ENCODE measurements at regions of chrX and their contacts with region 1.

Region 1: GRCh38 chrX:48521353-48522243 is at the start of gene EBP:
- DNase-seq: peak; percentile 83
- ATAC-seq: peak; percentile 96
- H3K4me3 ChIP-seq: peak within 1 kb of the TSS; percentile 68
- H3K27ac ChIP-seq: peak within 1 kb of the TSS; percentile 62
- H3K4me1 ChIP-seq: peaks cover 7% of the 10 kb centered on the region; the same call in 1 of the 2 replicates
- H3K27me3 ChIP-seq: no peaks in the 10 kb centered on the region
- CTCF ChIP-seq: no peak
- EP300 ChIP-seq: no peak
- POLR2A ChIP-seq: peak; percentile 94
- RAD21 ChIP-seq: no peak
- polyA plus RNA-seq, gene EBP: 364 to 628 TPM

Region 2: GRCh38 chrX:48508400-48509244 is 13.0 kb before region 1 on chrX and contains the start of gene PORCN:
- CTCF ChIA-PET with region 1: no interaction called
- POLR2A ChIA-PET with region 1: interaction called, 3 read pairs
- RAD21 ChIA-PET with region 1: no interaction called
- SMC1A ChIA-PET with region 1: interaction called, 3 read pairs
- in situ Hi-C with region 1: no loop called
- intact Hi-C with region 1: loop called (anchors 1 kb)
- DNase-seq: peak; percentile 33
- ATAC-seq: peak; percentile 97
- H3K4me3 ChIP-seq: peak within 1 kb of the TSS; percentile 79
- H3K27ac ChIP-seq: peak within 1 kb of the TSS; percentile 77
- H3K4me1 ChIP-seq: no peaks in the 10 kb centered on the region; the same call in 1 of the 2 replicates
- H3K27me3 ChIP-seq: no peaks in the 10 kb centered on the region
- CTCF ChIP-seq: no peak
- EP300 ChIP-seq: no peak
- POLR2A ChIP-seq: peak; percentile 90
- RAD21 ChIP-seq: no peak
- polyA plus RNA-seq, gene PORCN: 0.27 to 1.4 TPM

Region 3: GRCh38 chrX:48539345-48540027 is 17.9 kb after region 1 on chrX and contains the start of gene TBC1D25:
- CTCF ChIA-PET with region 1: interaction called, 14 read pairs
- POLR2A ChIA-PET with region 1: interaction called, 15 read pairs
- RAD21 ChIA-PET with region 1: interaction called, 5 read pairs
- SMC1A ChIA-PET with region 1: interaction called, 11 read pairs
- in situ Hi-C with region 1: no loop called
- intact Hi-C with region 1: loop called (anchors 2 kb)
- DNase-seq: peak; percentile 92
- ATAC-seq: peak; percentile 83
- H3K4me3 ChIP-seq: peak within 1 kb of the TSS; percentile 73
- H3K27ac ChIP-seq: peak within 1 kb of the TSS; percentile 81
- H3K4me1 ChIP-seq: no peaks in the 10 kb centered on the region
- H3K27me3 ChIP-seq: no peaks in the 10 kb centered on the region
- CTCF ChIP-seq: peak; percentile 27 to 37 (median 28); a peak in 4 of 6 replicates
- EP300 ChIP-seq: peak in 1 of 2 experiments; percentile 67; a peak in 1 of 4 replicates
- POLR2A ChIP-seq: peak; percentile 78
- RAD21 ChIP-seq: no peak
- polyA plus RNA-seq, gene TBC1D25: 0.79 to 2.3 TPM